ENCODE measurements at regions of chrX and their contacts with region 1.

Region 1: GRCh38 chrX:151753313-151754041 is 18.9 kb downstream of the CNGA2 start:
- DNase-seq: peak; percentile 35 to 76
- H3K4me3 ChIP-seq: no peak overlapping the region
- H3K27ac ChIP-seq: no peak overlapping the region
- H3K4me1 ChIP-seq: peaks cover 0 to 8% (median 0%) of the 10 kb centered on the region in 4 donors
- H3K27me3 ChIP-seq: peaks cover 0 to 17% (median 0%) of the 10 kb centered on the region in 3 donors
- CTCF ChIP-seq: peak in 5 of 7 experiments; percentile 56 to 70 (median 64)
- EP300 ChIP-seq: no peak
- POLR2A ChIP-seq: no peak

Region 2: GRCh38 chrX:152632445-152633097 is 879.1 kb after region 1 on chrX:
- intact Hi-C with region 1: loop called (anchors 10 kb)
- DNase-seq: peak; percentile 56 to 63
- H3K4me3 ChIP-seq: no peak overlapping the region
- H3K27ac ChIP-seq: no peak overlapping the region
- H3K4me1 ChIP-seq: peaks cover 0 to 2% (median under 1%) of the 10 kb centered on the region in 4 donors
- H3K27me3 ChIP-seq: peaks cover 0 to 18% (median 15%) of the 10 kb centered on the region in 3 donors
- CTCF ChIP-seq: peak in 5 of 7 experiments; percentile 24 to 79 (median 58)
- EP300 ChIP-seq: no peak
- POLR2A ChIP-seq: no peak

Measured in stomach (tissue), 19 donors.